ENCODE measurements at regions of chr2 and their contacts with region 1.

Region 1: GRCh38 chr2:223970343-223971128 is 13.3 kb downstream of the MRPL44 start:
- DNase-seq: peak; percentile 37
- H3K4me3 Mint-ChIP-seq: no peak overlapping the region
- H3K27ac Mint-ChIP-seq: no peak overlapping the region
- H3K4me1 Mint-ChIP-seq: peaks cover 5% of the 10 kb centered on the region
- H3K27me3 Mint-ChIP-seq: no peaks in the 10 kb centered on the region

Region 2: GRCh38 chr2:223779877-223780276 is 190.7 kb before region 1 on chr2:
- CTCF ChIA-PET with region 1: interaction called, 10 read pairs
- POLR2A ChIA-PET with region 1: no interaction called
- DNase-seq: peak; percentile 54
- H3K4me3 Mint-ChIP-seq: no peak overlapping the region
- H3K27ac Mint-ChIP-seq: no peak overlapping the region
- H3K4me1 Mint-ChIP-seq: no peaks in the 10 kb centered on the region
- H3K27me3 Mint-ChIP-seq: no peaks in the 10 kb centered on the region

Region 3: DNA sequence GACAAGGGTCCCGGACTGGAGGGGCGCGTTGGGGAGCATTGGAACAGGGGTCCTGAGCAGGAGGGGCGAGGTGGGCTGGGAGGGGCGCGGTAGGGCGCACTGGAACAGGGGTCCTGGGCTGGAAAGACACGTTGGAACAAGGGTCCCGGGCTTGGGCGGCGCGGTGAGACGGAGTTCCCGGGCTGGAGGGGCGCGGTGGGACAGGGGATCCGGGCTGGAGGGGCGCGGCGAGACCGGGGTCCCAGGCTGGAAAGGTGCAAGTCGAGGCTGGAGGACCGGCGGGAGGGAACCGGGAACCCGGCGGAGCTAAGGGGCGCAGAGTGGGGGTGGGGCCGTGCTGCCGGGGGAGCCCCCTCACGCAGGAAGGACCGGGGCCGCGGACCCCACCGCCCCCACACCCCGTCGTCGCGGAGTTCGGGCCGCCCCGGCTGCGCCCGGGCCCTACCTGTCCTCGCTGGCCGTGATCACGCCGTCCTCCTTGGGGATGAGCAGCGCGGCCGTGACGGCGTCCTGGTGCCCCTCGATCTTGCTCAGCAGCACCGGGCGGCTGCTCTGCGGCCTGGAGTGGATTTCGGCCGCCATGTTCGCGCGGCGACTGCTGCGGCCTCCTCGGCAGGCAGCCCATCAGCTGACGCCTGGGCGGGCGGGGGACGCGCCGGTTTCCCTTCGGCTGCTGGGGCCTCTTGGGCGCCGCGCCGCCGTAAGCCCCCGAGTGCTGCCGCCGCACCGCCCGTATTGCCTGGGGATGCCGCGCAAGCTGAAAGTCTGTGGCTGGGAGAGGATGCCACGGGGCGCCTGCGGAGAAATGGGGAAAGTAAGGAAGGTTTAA is 25.6 kb before region 1 on chr2 and contains the start of gene WDFY1:
- CTCF ChIA-PET with region 1: interaction called, 10 read pairs
- POLR2A ChIA-PET with region 1: interaction called, 5 read pairs
- DNase-seq: peak; percentile 86
- H3K4me3 Mint-ChIP-seq: peak within 1 kb of the TSS; percentile 90
- H3K27ac Mint-ChIP-seq: peak within 1 kb of the TSS; percentile 90
- H3K4me1 Mint-ChIP-seq: peaks cover 58% of the 10 kb centered on the region
- H3K27me3 Mint-ChIP-seq: no peaks in the 10 kb centered on the region
- total RNA-seq, gene WDFY1: 66.2 to 70.9 TPM

Region 4: GRCh38 chr2:223993621-223994232 is 23.2 kb after region 1 on chr2:
- CTCF ChIA-PET with region 1: interaction called, 44 read pairs
- POLR2A ChIA-PET with region 1: interaction called, 4 read pairs
- DNase-seq: peak; percentile 63
- H3K4me3 Mint-ChIP-seq: no peak overlapping the region
- H3K27ac Mint-ChIP-seq: no peak overlapping the region
- H3K4me1 Mint-ChIP-seq: peaks cover 10% of the 10 kb centered on the region
- H3K27me3 Mint-ChIP-seq: no peaks in the 10 kb centered on the region

Region 5: GRCh38 chr2:224369028-224369632 is 398.6 kb after region 1 on chr2:
- CTCF ChIA-PET with region 1: interaction called, 12 read pairs
- POLR2A ChIA-PET with region 1: no interaction called
- DNase-seq: no peak
- H3K4me3 Mint-ChIP-seq: no peak overlapping the region
- H3K27ac Mint-ChIP-seq: no peak overlapping the region
- H3K4me1 Mint-ChIP-seq: no peaks in the 10 kb centered on the region
- H3K27me3 Mint-ChIP-seq: peaks cover 6% of the 10 kb centered on the region

Measured in activated CD4-positive, alpha-beta memory T cell treated with anti-CD3 and anti-CD28 coated beads, Interleukin-2, amount 10 ng/mL, durations not matched to agents 7 days and 5 days (primary cell).